ENCODE measurements at regions of chr2 and their contacts with region 1.

Region 1: DNA sequence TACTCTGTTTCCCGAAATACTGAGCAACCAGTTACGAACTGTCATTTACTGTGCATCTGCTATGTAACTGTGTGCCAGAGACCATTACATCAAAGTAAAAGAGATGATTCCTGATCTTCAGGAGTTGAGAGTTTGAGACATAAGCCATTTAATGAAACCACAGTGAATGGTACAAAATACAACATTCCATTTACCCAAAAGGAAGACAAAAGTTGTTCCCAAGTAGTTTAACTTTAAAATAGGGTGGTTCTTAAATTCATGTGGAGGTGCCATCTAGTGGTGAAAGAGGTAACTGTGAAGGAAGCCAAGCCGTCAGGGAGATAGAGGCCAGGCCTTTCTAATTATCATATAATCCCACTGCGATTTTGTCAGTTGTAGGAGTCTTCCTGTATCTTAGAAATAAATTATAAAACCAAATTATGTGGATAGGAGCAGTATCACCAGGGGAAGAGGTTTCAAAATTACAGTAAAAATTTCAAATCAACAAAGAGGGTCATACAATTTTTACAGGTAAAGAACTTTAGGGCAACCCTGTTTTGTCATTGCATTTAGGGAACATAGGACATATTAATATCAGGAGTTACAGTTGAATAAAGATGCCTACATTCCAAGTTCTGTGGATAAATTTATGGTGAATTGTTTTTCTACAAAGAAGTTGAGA is 67.7 kb downstream of the EPAS1 start:
- DNase-seq: peak; percentile 63 to 75 (median 74)
- ATAC-seq: peak; percentile 86
- H3K4me3 ChIP-seq: no peak overlapping the region
- H3K27ac ChIP-seq: no peak overlapping the region
- H3K4me1 ChIP-seq: peaks cover 0 to 7% of the 10 kb centered on the region in 2 experiments; a peak in 2 of 5 replicates
- H3K27me3 ChIP-seq: no peaks in the 10 kb centered on the region
- CTCF ChIP-seq: peak; percentile 64 to 84 (median 73)
- EP300 ChIP-seq: no peak
- POLR2A ChIP-seq: no peak
- RAD21 ChIP-seq: peak; percentile 88 to 94

Region 2: DNA sequence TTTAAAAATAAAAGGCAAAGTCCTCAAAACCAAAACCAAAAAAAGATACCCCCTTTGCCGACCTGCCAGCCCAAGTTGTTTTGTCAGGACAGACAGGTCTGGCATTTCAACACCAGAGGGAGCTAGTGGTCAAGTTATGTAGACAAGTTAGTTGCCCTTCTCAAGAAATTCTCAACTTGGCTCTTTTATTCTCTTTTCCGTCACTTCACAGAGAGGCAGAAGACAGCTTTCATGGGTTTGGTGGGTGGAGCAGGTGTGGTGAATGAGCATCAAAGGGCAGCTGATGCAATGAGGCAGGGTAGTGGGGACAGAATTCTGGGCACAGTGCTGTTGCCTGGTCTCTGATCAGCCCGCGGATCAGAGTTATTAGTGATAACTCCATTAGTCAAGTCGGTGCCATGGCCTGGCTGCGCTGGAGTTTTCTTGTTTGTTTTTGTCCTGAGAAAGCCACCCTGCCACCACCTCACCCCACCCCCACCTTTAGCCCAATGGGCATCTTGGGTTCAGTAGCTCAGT is 371.4 kb before region 1 on chr2:
- CTCF ChIA-PET with region 1: interaction called, 15 read pairs
- POLR2A ChIA-PET with region 1: no interaction called
- in situ Hi-C with region 1: no loop called
- intact Hi-C with region 1: no loop called
- DNase-seq: peak; percentile 60 to 77 (median 66)
- ATAC-seq: peak; percentile 81
- H3K4me3 ChIP-seq: no peak overlapping the region
- H3K27ac ChIP-seq: no peak overlapping the region
- H3K4me1 ChIP-seq: no peaks in the 10 kb centered on the region
- H3K27me3 ChIP-seq: peaks cover 0 to 20% of the 10 kb centered on the region in 2 experiments; a peak in 2 of 5 replicates
- CTCF ChIP-seq: peak; percentile 62 to 81 (median 76)
- EP300 ChIP-seq: no peak
- POLR2A ChIP-seq: no peak
- RAD21 ChIP-seq: peak; percentile 85 to 87

Region 3: DNA sequence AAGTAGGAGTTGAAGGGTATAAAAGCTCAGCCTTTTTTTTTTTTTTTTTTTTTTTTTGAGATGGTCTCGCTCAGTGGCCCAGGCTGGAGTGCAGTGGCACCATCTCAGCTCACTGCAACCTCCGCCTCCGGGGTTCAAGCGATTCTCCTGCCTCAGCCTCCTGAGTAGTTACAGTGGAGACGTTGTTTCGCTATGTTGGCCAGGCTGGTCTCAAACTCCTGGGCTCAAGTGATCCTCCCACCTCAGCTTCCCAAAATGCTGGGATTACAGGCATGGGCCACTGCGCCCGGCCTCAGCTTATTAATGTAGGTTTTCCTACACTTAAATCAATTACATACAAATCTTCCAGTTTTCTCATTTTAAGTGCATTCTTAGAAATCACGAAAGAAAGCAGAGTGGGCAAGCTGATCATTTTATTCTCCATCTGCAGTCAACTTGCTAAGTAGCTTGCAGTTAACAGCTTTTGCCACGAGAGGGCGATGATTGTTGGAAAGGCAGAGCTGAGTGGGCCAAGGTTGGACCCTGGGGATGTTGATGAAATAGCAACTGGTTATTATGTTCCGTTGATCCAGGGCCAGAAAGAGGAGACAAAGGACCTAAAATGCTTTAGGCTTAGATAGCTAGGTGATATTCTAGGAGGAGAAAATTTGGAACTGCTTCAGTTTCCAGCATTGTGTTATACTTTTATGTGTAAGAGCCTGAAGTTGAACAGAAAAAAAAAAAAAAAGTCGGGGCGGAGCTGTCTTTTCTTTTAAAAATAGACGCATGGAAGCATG is 302.1 kb before region 1 on chr2:
- CTCF ChIA-PET with region 1: interaction called, 8 read pairs
- POLR2A ChIA-PET with region 1: no interaction called
- in situ Hi-C with region 1: no loop called
- intact Hi-C with region 1: loop called (anchors 1 kb)
- DNase-seq: peak; percentile 61 to 77 (median 74)
- ATAC-seq: peak; percentile 86
- H3K4me3 ChIP-seq: no peak overlapping the region
- H3K27ac ChIP-seq: no peak overlapping the region
- H3K4me1 ChIP-seq: no peaks in the 10 kb centered on the region; a peak in 1 of 5 replicates
- H3K27me3 ChIP-seq: peaks cover 13 to 24% of the 10 kb centered on the region in 2 experiments; a peak in 4 of 5 replicates
- CTCF ChIP-seq: peak; percentile 77 to 80 (median 79)
- EP300 ChIP-seq: no peak
- POLR2A ChIP-seq: no peak
- RAD21 ChIP-seq: peak; percentile 74 to 83

Region 4: GRCh38 chr2:46296840-46297545 is 67.9 kb before region 1 on chr2 and contains the start of gene EPAS1:
- CTCF ChIA-PET with region 1: interaction called, 7 read pairs
- POLR2A ChIA-PET with region 1: no interaction called
- in situ Hi-C with region 1: loop called (anchors 5 kb)
- intact Hi-C with region 1: loop called (anchors 1 kb)
- DNase-seq: peak; percentile 93 to 99 (median 98)
- ATAC-seq: peak; percentile 89
- H3K4me3 ChIP-seq: peak within 1 kb of the TSS; percentile 56
- H3K27ac ChIP-seq: peak within 1 kb of the TSS; percentile 66; the same call in 2 of the 3 replicates
- H3K4me1 ChIP-seq: peaks cover 16 to 39% of the 10 kb centered on the region in 2 experiments
- H3K27me3 ChIP-seq: peaks cover 5 to 13% of the 10 kb centered on the region in 2 experiments; a peak in 3 of 5 replicates
- CTCF ChIP-seq: no peak
- EP300 ChIP-seq: no peak
- POLR2A ChIP-seq: peak; percentile 49; the same call in 1 of the 2 replicates
- RAD21 ChIP-seq: no peak
- polyA plus RNA-seq, gene EPAS1: 0.25 to 0.56 TPM

Region 5: GRCh38 chr2:46521215-46521683 is 156.3 kb after region 1 on chr2:
- CTCF ChIA-PET with region 1: no interaction called
- POLR2A ChIA-PET with region 1: no interaction called
- in situ Hi-C with region 1: no loop called
- intact Hi-C with region 1: no loop called
- DNase-seq: no peak
- ATAC-seq: no peak
- H3K4me3 ChIP-seq: no peak overlapping the region
- H3K27ac ChIP-seq: no peak overlapping the region
- H3K4me1 ChIP-seq: no peaks in the 10 kb centered on the region
- H3K27me3 ChIP-seq: no peaks in the 10 kb centered on the region; a peak in 1 of 5 replicates
- CTCF ChIP-seq: no peak
- EP300 ChIP-seq: no peak
- POLR2A ChIP-seq: no peak
- RAD21 ChIP-seq: no peak

Region 6: DNA sequence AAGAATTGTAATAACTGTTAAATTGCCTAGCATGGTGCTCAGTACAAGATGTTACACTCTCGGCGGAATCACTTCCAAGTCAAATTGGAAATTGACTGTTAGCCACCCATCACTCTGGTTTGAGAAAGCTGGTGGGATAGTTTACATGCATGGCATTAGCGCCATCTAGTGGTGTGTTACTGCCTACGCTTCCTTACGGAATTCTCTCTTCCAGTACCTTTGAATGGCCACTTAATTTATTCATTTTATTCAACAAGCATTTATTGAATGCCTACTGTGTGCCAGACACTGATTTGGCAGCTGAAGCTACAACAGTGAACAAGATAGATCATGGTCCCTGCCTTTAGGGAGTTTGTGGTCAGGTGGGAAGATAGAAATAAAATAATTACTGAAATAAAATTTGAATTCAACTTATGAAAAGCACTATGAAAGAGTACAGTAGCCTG is 285.7 kb after region 1 on chr2:
- CTCF ChIA-PET with region 1: no interaction called
- POLR2A ChIA-PET with region 1: no interaction called
- in situ Hi-C with region 1: no loop called
- intact Hi-C with region 1: loop called (anchors 5 kb)
- DNase-seq: peak; percentile 64 to 86 (median 72)
- ATAC-seq: peak; percentile 92
- H3K4me3 ChIP-seq: no peak overlapping the region
- H3K27ac ChIP-seq: no peak overlapping the region
- H3K4me1 ChIP-seq: no peaks in the 10 kb centered on the region; a peak in 1 of 5 replicates
- H3K27me3 ChIP-seq: peaks cover 13 to 18% of the 10 kb centered on the region in 2 experiments; a peak in 3 of 5 replicates
- CTCF ChIP-seq: peak; percentile 82 to 97 (median 87)
- EP300 ChIP-seq: no peak
- POLR2A ChIP-seq: no peak
- RAD21 ChIP-seq: peak; percentile 92 to 96